BJ (cell line): ENCODE measurements at regions of chr15 and their contacts with region 1.

Region 1: DNA sequence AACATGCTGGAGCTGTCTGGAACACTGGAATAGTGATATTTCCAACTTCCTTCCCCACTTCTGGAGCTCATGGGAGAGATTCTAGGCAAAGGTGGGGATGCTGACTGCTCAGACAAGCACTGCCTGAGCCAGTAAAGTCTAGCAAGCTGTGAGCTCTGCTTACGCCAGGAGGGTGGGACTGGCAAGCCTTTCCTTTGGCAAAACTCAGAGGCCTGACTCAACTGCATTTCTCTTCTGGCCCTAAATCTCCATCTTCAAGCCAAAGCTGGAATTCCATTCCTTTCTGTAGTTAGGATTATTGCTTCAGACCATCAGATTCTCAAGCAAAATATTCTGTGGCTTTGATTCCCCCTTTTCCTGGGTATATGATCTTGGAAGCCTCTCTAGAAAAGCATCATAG is 20.3 kb upstream of the EPB42 start:
- DNase-seq: no peak
- H3K4me3 ChIP-seq: no peak overlapping the region
- H3K27me3 ChIP-seq: peaks cover 31% of the 10 kb centered on the region
- CTCF ChIP-seq: no peak

Region 2: DNA sequence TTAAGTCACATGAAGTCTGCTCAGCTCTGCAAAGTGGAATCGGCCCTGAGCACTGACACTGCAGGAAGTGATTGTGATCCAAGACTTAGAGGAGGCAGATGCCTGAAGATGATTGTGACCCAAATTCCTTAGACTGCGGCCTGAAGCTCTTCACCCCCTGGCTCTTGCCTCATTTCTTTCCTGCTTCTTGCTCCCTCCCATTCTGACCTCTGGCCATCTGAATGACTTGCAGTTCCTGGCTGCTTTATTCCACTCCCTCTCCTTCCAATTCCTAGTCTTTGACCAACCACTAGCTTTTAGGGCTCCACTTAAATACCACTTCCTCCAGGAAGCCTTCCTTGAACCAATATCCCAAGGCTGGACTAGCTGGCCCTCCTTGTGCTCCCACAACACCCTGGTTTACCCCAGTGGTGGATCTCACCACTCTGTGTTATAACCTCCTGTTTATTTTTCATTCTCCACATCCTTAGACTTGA is 10.4 kb before region 1 on chr15:
- CTCF ChIA-PET with region 1: interaction called, 11 read pairs
- POLR2A ChIA-PET with region 1: no interaction called
- DNase-seq: no peak
- H3K4me3 ChIP-seq: no peak overlapping the region
- H3K27me3 ChIP-seq: peaks cover 11% of the 10 kb centered on the region
- CTCF ChIP-seq: no peak

Region 3: GRCh38 chr15:43317566-43318184 is 76.6 kb after region 1 on chr15:
- CTCF ChIA-PET with region 1: no interaction called
- POLR2A ChIA-PET with region 1: interaction called, 12 read pairs
- DNase-seq: no peak
- H3K4me3 ChIP-seq: no peak overlapping the region
- H3K27me3 ChIP-seq: peaks cover 5% of the 10 kb centered on the region; the same call in 1 of the 2 replicates
- CTCF ChIP-seq: no peak